Caco-2 (cell line): ENCODE measurements at regions of chr7 and their contacts with region 1.

Region 1: GRCh38 chr7:117083648-117084047 is 130.3 kb downstream of the ST7 start:
- DNase-seq: no peak
- H3K4me3 ChIP-seq: no peak overlapping the region
- H3K4me3 Mint-ChIP-seq: no peak overlapping the region
- H3K27ac Mint-ChIP-seq: no peak overlapping the region
- H3K4me1 ChIP-seq: peaks cover 10% of the 10 kb centered on the region
- H3K4me1 Mint-ChIP-seq: peaks cover 14% of the 10 kb centered on the region
- H3K27me3 ChIP-seq: no peaks in the 10 kb centered on the region
- H3K27me3 Mint-ChIP-seq: no peaks in the 10 kb centered on the region
- CTCF ChIP-seq: no peak

Region 2: DNA sequence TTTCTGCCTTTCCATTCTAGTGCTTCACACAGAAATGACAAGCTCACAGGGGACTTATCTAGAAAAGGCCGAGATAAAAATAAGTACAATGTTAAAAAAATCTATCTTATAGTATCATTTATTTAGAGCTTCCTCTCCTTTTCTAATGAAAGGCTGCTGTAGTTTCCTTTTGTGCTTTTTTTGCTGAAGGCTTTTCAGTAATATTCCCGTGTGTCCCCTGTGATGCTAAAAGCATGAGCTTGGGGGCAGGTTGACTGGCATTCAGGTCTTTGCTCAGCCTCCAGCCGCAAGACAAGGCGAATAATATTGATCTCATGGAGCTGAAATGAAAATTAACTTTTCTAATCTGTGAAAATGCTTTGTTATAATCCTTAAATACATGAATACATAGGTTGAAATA is 12.7 kb after region 1 on chr7:
- CTCF ChIA-PET with region 1: no interaction called
- POLR2A ChIA-PET with region 1: no interaction called
- intact Hi-C with region 1: loop called (anchors 1 kb)
- DNase-seq: no peak
- H3K4me3 ChIP-seq: no peak overlapping the region
- H3K4me3 Mint-ChIP-seq: no peak overlapping the region
- H3K27ac Mint-ChIP-seq: no peak overlapping the region
- H3K4me1 ChIP-seq: no peaks in the 10 kb centered on the region
- H3K4me1 Mint-ChIP-seq: no peaks in the 10 kb centered on the region
- H3K27me3 ChIP-seq: no peaks in the 10 kb centered on the region
- H3K27me3 Mint-ChIP-seq: no peaks in the 10 kb centered on the region
- CTCF ChIP-seq: no peak